Activated CD4-positive, alpha-beta T cell treated with anti-CD3 and anti-CD28 coated beads for 36 hours (primary cell): ENCODE measurements at regions of chr15 and their contacts with region 1.

Region 1: GRCh38 chr15:72155635-72156616 is 37.7 kb downstream of the SENP8 start:
- DNase-seq: peak; percentile 90
- ATAC-seq: peak; percentile 95
- H3K4me3 Mint-ChIP-seq: peak overlapping the region; percentile 53
- H3K27ac Mint-ChIP-seq: peak overlapping the region; percentile 7
- H3K4me1 Mint-ChIP-seq: peaks cover 5% of the 10 kb centered on the region
- H3K27me3 Mint-ChIP-seq: peaks cover 2% of the 10 kb centered on the region

Region 2: DNA sequence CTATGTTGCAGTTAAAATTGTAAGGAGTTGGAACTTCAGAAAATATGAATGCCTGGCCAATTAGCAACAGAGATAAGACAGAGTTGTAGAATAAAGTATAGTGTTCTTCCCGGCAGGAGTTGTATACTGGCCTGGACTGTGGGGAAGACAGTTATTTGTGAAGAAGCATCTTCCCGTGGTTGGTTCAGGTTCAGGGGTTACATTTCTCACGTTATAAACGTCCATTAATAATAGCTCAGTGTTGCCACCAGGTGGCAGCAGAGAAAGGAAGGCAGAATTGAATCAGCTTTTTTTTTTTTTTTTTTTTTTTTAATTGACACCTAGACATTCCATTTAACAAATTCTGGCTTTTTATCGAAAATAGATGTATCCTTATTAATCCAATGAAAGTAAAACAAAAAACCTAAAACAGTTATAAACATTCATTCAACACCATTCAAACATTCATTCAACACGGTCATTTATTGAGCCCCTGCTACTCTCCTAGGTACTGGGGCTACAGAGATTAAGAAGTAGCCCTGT is 412.0 kb before region 1 on chr15:
- CTCF ChIA-PET with region 1: interaction called, 44 read pairs
- POLR2A ChIA-PET with region 1: no interaction called
- intact Hi-C with region 1: loop called (anchors 1 kb)
- DNase-seq: peak; percentile 78
- ATAC-seq: peak; percentile 44
- H3K4me3 Mint-ChIP-seq: no peak overlapping the region
- H3K27ac Mint-ChIP-seq: no peak overlapping the region
- H3K4me1 Mint-ChIP-seq: no peaks in the 10 kb centered on the region
- H3K27me3 Mint-ChIP-seq: peaks cover 5% of the 10 kb centered on the region

Region 3: GRCh38 chr15:71780115-71780976 is 375.6 kb before region 1 on chr15:
- CTCF ChIA-PET with region 1: interaction called, 12 read pairs
- POLR2A ChIA-PET with region 1: no interaction called
- intact Hi-C with region 1: loop called (anchors 1 kb)
- DNase-seq: peak; percentile 59
- ATAC-seq: peak; percentile 74
- H3K4me3 Mint-ChIP-seq: no peak overlapping the region
- H3K27ac Mint-ChIP-seq: peak overlapping the region; percentile 7
- H3K4me1 Mint-ChIP-seq: peaks cover 12% of the 10 kb centered on the region
- H3K27me3 Mint-ChIP-seq: peaks cover 13% of the 10 kb centered on the region

Region 4: DNA sequence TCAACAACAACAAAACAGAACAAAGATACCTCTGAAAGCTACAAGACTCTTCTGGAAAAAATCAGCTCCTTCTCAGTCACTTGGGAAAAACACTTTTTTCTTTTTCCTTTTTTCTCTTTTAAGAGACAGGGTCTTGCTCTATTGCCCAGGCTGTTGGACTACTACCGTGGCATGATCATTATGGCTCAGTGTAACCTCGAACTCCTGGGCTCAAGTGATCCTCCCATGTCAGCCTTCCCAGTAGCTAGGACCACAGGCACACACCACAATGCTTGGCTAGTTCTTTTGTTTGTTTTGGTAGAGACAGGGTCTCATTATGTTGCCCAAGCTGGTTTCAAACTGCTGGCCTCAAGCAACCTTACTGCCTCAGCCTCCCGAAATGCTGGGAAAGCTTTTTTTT is 50.8 kb before region 1 on chr15:
- CTCF ChIA-PET with region 1: interaction called, 10 read pairs
- POLR2A ChIA-PET with region 1: no interaction called
- intact Hi-C with region 1: no loop called
- DNase-seq: no peak
- ATAC-seq: no peak
- H3K4me3 Mint-ChIP-seq: no peak overlapping the region
- H3K27ac Mint-ChIP-seq: no peak overlapping the region
- H3K4me1 Mint-ChIP-seq: peaks cover 6% of the 10 kb centered on the region
- H3K27me3 Mint-ChIP-seq: no peaks in the 10 kb centered on the region